CD8-positive, alpha-beta T cell (primary cell): ENCODE measurements at regions of chr2 and their contacts with region 1.

Region 1: DNA sequence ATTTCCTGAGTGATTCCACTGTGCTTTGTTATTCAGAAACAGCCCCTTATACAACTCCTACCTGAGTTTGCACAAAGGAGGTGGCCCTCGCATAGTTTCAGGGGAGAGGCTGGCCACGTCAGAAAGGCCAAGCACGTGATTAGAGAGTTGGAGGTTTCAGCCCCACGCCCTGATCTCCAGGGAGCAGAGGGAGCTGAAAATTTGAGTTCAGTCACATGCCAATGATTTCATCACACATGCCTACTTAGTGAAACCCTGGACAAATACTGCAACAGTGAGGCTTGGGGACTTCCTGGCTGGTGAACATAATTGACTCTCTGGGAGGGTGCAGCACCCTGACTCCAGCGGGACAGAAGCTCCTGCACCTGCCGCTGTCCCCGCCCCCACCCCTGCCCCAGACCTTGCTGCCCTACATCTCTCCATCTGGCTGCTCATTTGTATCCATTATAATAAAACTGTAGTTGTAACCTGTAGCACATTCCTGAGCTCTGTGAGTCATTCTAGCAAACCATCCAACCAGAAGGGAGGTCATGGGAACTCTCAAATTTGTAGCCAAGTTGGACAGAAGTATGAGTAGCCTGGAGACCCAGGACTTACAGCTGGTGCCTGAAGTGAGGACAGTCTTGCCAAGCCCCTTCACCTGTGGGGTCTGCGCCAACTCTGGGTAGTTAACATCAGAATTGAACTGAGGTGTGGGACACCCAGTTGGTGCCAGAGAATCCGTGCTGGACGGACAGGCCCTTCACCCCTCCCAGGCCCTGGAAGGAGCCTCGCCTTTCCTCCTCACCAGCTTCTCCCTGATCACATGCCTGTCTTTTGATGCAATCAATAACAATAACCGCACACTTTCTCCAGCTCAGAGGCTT is 224.3 kb downstream of the ANAPC1 start:
- DNase-seq: peak in 1 of 9 experiments; percentile 22
- ATAC-seq: no peak
- H3K4me3 ChIP-seq: no peak overlapping the region
- H3K4me3 Mint-ChIP-seq: no peak overlapping the region
- H3K27ac ChIP-seq: no peak overlapping the region
- H3K27ac Mint-ChIP-seq: no peak overlapping the region
- H3K4me1 ChIP-seq: no peaks in the 10 kb centered on the region
- H3K4me1 Mint-ChIP-seq: no peaks in the 10 kb centered on the region
- H3K27me3 ChIP-seq: no peaks in the 10 kb centered on the region
- H3K27me3 Mint-ChIP-seq: no peaks in the 10 kb centered on the region
- CTCF ChIP-seq: no peak

Region 2: GRCh38 chr2:111624401-111625156 is 35.1 kb before region 1 on chr2:
- CTCF ChIA-PET with region 1: no interaction called
- POLR2A ChIA-PET with region 1: no interaction called
- intact Hi-C with region 1: loop called in 1 of 2 experiments (anchors 1 kb)
- DNase-seq: no peak
- ATAC-seq: no peak
- H3K4me3 ChIP-seq: no peak overlapping the region
- H3K4me3 Mint-ChIP-seq: no peak overlapping the region
- H3K27ac ChIP-seq: no peak overlapping the region
- H3K27ac Mint-ChIP-seq: no peak overlapping the region
- H3K4me1 ChIP-seq: no peaks in the 10 kb centered on the region
- H3K4me1 Mint-ChIP-seq: no peaks in the 10 kb centered on the region
- H3K27me3 ChIP-seq: no peaks in the 10 kb centered on the region
- H3K27me3 Mint-ChIP-seq: no peaks in the 10 kb centered on the region
- CTCF ChIP-seq: no peak

Region 3: DNA sequence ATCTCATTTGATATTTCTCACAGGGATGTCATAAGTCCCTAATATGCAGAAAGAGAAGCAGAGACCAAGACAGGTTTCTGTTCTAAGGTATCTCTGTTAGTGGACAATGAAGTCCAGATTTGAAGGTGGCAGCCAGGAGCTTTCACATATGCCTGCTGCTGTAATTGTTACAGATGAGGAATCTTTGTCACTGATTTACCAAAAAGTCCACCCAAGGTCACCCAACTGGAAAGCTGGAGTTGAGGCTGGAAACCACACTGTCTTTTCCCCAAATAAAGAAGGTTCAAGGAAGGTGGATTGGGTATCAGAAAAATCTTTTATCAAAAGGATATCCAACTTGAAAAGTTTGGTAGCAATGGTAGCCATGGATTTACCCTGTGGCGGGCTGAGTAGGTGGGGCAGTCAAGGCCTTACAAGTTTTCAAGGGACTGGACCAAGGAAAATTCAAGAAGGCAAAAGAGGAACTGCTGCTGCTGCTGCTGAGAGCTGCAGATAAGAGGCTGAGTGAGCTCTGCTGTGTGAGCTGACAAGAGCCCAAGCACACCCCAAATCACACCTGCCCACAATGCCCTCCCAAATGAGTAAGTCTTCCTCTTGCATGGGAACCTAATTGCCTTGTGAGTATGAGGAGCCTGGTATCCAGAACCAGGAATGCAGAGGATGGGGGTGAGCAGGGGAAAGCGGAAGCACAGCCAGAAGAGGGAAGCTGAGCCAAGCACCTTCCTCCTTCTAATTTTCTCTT is 16.9 kb before region 1 on chr2:
- CTCF ChIA-PET with region 1: no interaction called
- POLR2A ChIA-PET with region 1: no interaction called
- intact Hi-C with region 1: loop called in 1 of 2 experiments (anchors 1 kb)
- DNase-seq: no peak
- ATAC-seq: no peak
- H3K4me3 ChIP-seq: no peak overlapping the region
- H3K4me3 Mint-ChIP-seq: no peak overlapping the region
- H3K27ac ChIP-seq: no peak overlapping the region
- H3K27ac Mint-ChIP-seq: no peak overlapping the region
- H3K4me1 ChIP-seq: no peaks in the 10 kb centered on the region
- H3K4me1 Mint-ChIP-seq: no peaks in the 10 kb centered on the region
- H3K27me3 ChIP-seq: no peaks in the 10 kb centered on the region
- H3K27me3 Mint-ChIP-seq: peaks cover 7% of the 10 kb centered on the region
- CTCF ChIP-seq: no peak